Body of pancreas (tissue), 4 donors: ENCODE measurements at regions of chr15 and their contacts with region 1.

Region 1: DNA sequence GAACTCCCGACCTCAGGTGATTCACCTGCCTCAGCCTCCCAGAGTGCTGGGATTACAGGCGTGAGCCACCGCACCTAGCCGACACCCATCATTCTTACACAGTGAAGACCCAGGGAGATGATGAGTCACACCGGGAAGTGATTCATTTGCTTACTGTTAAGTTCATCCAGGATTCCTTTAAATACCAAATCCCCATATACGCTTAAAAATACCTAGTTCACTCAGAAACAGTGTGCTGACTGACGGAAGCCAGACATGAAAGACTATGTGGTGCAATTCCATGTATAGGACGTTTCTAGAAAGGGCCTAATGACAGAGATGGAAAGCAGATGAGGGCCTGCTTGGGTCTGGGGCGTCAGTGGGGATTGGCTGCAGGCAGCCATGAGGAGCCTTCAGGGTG is 75.2 kb downstream of the APBA2 start:
- DNase-seq: no peak
- ATAC-seq: no peak
- H3K4me3 ChIP-seq: no peak overlapping the region
- H3K27ac ChIP-seq: no peak overlapping the region
- H3K4me1 ChIP-seq: no peaks in the 10 kb centered on the region
- H3K27me3 ChIP-seq: no peaks in the 10 kb centered on the region
- CTCF ChIP-seq: no peak
- POLR2A ChIP-seq: no peak

Region 2: GRCh38 chr15:28896951-28897350 is 64.0 kb before region 1 on chr15:
- intact Hi-C with region 1: loop called (anchors 10 kb)
- DNase-seq: no peak
- ATAC-seq: no peak
- H3K4me3 ChIP-seq: no peak overlapping the region
- H3K27ac ChIP-seq: no peak overlapping the region
- H3K4me1 ChIP-seq: peaks cover 8% of the 10 kb centered on the region
- H3K27me3 ChIP-seq: no peaks in the 10 kb centered on the region
- CTCF ChIP-seq: no peak
- POLR2A ChIP-seq: no peak

Region 3: DNA sequence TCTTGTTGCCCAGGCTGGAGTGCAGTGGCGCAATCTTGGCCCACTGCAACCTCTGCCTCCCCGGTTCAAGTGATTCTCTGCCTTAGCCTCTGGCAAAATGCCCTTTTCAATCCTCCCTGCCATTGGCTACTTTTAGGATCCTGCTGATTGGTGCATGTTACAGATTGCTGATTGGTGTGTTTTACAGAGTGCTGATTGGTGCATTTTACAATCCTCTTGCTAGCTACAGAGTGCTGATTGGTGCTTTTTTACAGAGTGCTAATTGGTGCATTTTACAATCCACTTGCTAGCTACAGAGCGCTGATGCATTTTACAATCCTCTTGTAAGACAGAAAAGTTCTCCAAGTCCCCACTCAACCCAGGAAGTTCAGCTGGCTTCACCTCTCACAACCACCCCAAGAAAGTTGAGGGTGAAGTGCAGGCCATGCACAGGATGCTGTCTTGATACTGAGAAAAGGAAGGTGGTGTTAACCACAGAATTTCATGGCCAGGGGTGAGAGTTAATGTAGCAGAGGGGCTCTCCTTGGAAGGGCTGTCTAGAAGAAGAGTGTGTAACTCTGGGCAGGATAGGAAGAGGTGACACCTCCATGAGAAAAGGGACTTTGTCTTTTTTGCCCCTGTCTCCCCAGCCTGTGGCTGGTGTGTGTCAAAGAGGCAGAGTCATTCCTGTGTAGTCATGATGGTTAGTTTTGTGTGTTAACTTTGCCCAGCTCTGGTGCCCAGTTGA is 70.7 kb after region 1 on chr15:
- intact Hi-C with region 1: no loop called
- DNase-seq: no peak
- ATAC-seq: no peak
- H3K4me3 ChIP-seq: no peak overlapping the region
- H3K27ac ChIP-seq: no peak overlapping the region
- H3K4me1 ChIP-seq: peaks cover 18% of the 10 kb centered on the region
- H3K27me3 ChIP-seq: no peaks in the 10 kb centered on the region
- CTCF ChIP-seq: no peak
- POLR2A ChIP-seq: no peak